ENCODE measurements at regions of chr5 and their contacts with region 1.

Region 1: DNA sequence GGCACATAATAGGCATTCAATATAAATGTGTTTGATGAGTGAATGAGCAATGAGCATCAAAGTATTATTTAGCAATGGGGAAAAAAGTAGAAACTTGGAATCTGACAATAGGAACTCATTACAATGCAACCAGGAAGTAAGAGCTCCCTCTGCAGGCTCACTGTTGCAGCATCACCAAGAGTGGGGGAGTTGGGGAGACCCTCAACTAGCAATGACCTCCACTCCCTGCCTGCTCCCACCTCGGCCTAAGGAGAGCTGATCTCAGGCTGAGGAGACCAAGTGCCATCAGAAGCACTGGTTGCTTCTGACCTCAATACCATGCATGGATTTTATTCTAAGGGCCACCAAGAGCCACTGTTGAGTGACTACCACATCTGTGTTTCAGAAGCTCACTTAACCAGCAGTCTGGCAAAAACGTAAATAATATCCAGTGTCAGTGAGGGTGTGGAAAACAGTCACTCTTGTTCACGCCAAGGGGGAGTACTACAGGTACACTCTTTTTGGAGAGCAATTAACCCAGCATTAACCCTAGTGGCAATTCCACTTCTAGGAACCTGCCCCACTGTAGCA is 8.0 kb downstream of the VDAC1 start:
- DNase-seq: peak; percentile 33
- H3K4me3 Mint-ChIP-seq: no peak overlapping the region
- H3K27ac Mint-ChIP-seq: no peak overlapping the region
- H3K4me1 Mint-ChIP-seq: peaks cover 56% of the 10 kb centered on the region
- H3K27me3 Mint-ChIP-seq: no peaks in the 10 kb centered on the region
- CTCF ChIP-seq: peak; percentile 55

Region 2: DNA sequence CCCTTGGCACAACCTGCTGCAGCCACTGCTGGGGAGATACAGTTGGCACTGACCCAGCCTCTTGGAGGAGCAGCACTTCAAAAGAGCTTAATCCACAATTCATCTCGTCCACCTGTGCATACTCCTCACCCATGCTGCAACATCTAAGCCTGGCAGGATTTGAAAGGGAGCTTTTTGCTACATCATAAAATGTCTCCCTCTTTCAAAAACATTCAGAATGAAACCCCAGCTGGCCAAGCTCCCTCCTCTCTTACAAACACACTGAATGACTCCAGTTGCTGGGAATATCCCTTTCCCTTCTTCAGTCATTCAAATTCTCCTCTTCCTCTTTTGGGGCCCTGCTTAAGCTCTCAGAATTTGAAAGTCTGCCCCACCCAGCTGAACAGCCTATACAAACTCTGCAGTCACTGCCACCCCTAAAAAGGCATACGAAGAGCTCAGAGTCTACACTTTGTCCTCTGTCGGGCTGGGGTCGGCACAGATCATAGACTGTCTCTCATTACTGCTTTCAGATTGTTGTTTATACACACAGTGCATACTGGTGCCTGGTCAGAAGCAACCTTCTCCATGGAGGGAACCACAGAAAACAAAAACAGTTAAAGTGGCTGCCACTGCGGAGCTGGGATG is 19.5 kb before region 1 on chr5:
- CTCF ChIA-PET with region 1: interaction called, 79 read pairs
- POLR2A ChIA-PET with region 1: interaction called, 3 read pairs
- intact Hi-C with region 1: no loop called
- DNase-seq: no peak
- H3K4me3 Mint-ChIP-seq: no peak overlapping the region
- H3K27ac Mint-ChIP-seq: peak overlapping the region; percentile 49
- H3K4me1 Mint-ChIP-seq: no peaks in the 10 kb centered on the region
- H3K27me3 Mint-ChIP-seq: no peaks in the 10 kb centered on the region
- CTCF ChIP-seq: no peak